PC-9 (cell line): ENCODE measurements at regions of chr1 and their contacts with region 1.

Region 1: DNA sequence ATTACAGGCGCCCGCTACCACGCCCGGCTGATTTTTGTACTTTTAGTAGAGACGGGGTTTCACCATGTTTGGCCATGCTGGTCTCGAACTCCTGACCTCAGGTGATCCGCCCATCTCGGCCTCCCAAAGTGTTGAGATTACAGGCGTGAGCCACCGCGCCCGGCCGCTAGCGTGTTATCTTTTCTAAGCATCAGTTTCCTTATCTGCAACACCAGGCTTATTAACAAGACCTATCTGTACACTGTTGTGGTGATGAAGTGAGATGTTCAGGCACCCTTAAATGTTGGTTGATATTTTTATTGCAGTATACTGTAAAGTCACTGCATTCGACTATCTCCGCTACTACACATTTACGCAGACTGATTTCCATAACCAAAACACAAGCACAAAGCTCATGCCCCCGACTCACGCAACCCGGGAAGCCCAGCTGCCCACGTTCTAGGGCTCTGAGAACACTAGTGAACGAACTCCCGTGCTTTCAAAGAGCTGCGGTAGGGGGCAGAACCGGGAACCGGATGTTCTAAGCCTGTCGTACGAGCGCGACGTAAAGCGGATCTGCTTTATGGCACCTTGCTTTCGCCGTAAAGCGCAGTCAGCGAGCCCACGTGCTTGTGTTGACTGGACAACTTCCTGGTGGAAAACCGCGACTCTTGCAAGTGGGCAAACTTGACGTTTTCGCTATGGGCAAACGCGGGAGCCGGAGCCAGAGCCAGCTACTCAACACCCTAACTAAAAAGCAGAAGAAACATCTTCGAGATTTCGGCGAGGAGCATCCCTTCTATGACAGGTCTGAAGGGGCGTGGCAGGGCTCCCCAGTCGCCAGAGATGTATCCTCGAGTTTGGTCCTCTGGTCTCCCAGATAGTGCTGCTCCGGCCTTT is at the start of gene UTP25:
- DNase-seq: peak; percentile 91 to 93
- H3K4me3 ChIP-seq: peak within 1 kb of the TSS; percentile 74
- H3K27ac ChIP-seq: peak within 1 kb of the TSS; percentile 51
- H3K4me1 ChIP-seq: peaks cover 18% of the 10 kb centered on the region
- H3K27me3 ChIP-seq: no peaks in the 10 kb centered on the region
- CTCF ChIP-seq: peak; percentile 73
- total RNA-seq, gene UTP25: 8.2 and 9.3 TPM in 2 replicates

Region 2: DNA sequence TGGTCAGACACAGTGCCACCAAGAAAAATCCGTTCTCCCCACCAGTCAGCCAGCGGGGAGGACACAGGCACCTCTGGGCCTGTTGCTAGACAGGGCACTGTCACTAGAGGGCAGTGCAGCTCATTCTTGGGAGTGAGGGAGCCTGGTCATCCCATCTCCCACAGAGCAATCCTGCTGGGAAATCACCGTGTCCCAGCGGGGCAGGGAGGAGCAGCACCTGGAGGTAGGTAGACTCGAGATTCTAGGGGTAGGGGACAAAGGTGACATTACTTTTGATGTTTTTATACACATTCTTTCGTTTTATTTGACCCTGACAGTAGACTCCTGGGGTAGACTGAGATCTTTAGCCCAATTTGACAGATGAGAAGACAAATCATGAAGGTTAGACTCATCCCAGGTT is 250.8 kb before region 1 on chr1:
- CTCF ChIA-PET with region 1: interaction called, 3 read pairs
- POLR2A ChIA-PET with region 1: no interaction called
- intact Hi-C with region 1: loop called (anchors 10 kb)
- DNase-seq: peak; percentile 52 to 80
- H3K4me3 ChIP-seq: no peak overlapping the region
- H3K27ac ChIP-seq: no peak overlapping the region
- H3K4me1 ChIP-seq: no peaks in the 10 kb centered on the region
- H3K27me3 ChIP-seq: peaks cover 25% of the 10 kb centered on the region; the same call in 1 of the 2 replicates
- CTCF ChIP-seq: peak; percentile 89

Region 3: DNA sequence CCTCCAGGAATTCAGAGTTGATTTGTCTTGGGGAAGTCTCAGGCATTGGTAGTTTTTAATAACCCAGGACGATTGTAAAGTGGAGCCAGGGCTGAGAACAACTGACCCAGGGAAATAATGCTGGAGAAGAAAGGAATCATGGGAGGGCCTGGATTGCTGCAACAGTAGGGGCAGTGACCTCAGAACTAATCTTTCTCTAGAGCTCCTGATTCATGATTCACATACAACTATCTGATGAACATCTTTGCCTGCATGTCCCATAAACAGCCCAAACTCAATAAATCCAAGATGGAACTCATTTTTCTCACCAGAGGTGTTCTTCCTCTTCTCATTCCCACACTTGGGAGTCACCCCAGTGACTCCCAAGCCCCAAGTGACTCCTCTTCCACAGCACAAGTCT is 160.5 kb before region 1 on chr1:
- CTCF ChIA-PET with region 1: interaction called, 12 read pairs
- POLR2A ChIA-PET with region 1: no interaction called
- intact Hi-C with region 1: no loop called
- DNase-seq: no peak
- H3K4me3 ChIP-seq: no peak overlapping the region
- H3K27ac ChIP-seq: no peak overlapping the region
- H3K4me1 ChIP-seq: peaks cover 32% of the 10 kb centered on the region
- H3K27me3 ChIP-seq: no peaks in the 10 kb centered on the region
- CTCF ChIP-seq: no peak

Region 4: GRCh38 chr1:209747580-209748262 is 79.9 kb before region 1 on chr1:
- CTCF ChIA-PET with region 1: interaction called, 3 read pairs
- POLR2A ChIA-PET with region 1: no interaction called
- intact Hi-C with region 1: loop called (anchors 5 kb)
- DNase-seq: peak; percentile 95 to 97
- H3K4me3 ChIP-seq: no peak overlapping the region
- H3K27ac ChIP-seq: no peak overlapping the region
- H3K4me1 ChIP-seq: no peaks in the 10 kb centered on the region; the same call in 1 of the 2 replicates
- H3K27me3 ChIP-seq: no peaks in the 10 kb centered on the region
- CTCF ChIP-seq: peak; percentile 94

Region 5: GRCh38 chr1:209784265-209785169 is 43.1 kb before region 1 on chr1 and contains the start of gene C1orf74:
- CTCF ChIA-PET with region 1: interaction called, 3 read pairs
- POLR2A ChIA-PET with region 1: no interaction called
- intact Hi-C with region 1: loop called (anchors 2 kb)
- DNase-seq: peak; percentile 94 to 98
- H3K4me3 ChIP-seq: peak within 1 kb of the TSS; percentile 92
- H3K27ac ChIP-seq: peak within 1 kb of the TSS; percentile 85
- H3K4me1 ChIP-seq: peaks cover 22% of the 10 kb centered on the region
- H3K27me3 ChIP-seq: no peaks in the 10 kb centered on the region
- CTCF ChIP-seq: no peak
- total RNA-seq, gene C1orf74: 4.1 and 5.0 TPM in 2 replicates

Region 6: DNA sequence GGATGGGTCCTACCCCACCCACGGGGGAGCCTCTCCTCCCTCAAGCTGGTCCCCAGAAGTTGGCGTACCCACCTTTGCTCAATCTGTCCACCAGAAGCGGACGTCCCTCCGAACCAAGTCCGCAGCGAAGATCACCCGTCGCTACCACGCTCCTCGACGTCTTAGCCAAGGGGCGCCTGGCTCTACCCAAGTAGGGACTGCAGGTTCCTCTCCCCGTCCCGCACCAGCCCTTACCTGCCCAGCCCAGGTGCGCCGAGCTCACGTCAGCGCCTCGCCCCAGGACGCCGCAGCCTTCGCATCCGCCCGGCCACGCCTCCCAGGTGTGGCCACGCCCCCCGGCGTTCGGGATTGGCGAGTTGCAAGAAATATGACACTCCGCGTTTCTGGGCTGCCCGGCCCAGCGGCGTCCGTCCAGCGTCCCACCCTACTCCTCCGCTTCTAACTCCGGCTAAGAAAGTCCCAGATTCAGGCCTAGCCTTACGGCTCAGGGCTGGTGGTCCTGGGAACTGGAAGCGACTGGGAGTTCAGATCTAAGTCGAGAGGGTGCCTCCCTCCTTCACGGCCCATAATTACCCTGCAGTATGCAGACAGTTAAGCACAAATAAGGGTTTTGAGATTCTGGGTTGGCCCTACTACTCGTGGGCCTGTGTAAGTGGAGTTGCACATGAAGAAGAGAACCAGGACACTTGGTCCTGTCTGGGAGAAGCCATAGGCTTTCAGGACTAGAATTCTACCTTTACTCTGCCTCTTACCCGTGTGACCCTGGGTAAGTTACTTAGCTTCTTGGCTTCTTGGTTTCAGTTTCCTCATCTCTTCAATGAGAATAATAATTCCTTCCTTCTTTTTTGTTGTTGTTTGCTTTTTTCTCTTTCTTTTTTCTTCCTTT is 21.5 kb before region 1 on chr1 and contains the start of gene IRF6:
- CTCF ChIA-PET with region 1: interaction called, 11 read pairs
- POLR2A ChIA-PET with region 1: no interaction called
- intact Hi-C with region 1: loop called (anchors 2 kb)
- DNase-seq: peak; percentile 89 to 96
- H3K4me3 ChIP-seq: peak within 1 kb of the TSS; percentile 78
- H3K27ac ChIP-seq: peak within 1 kb of the TSS; percentile 80
- H3K4me1 ChIP-seq: peaks cover 41% of the 10 kb centered on the region
- H3K27me3 ChIP-seq: no peaks in the 10 kb centered on the region
- CTCF ChIP-seq: no peak
- total RNA-seq, gene IRF6: 46.5 and 50.9 TPM in 2 replicates